ENCODE measurements at regions of chr12 and their contacts with region 1.

Region 1: DNA sequence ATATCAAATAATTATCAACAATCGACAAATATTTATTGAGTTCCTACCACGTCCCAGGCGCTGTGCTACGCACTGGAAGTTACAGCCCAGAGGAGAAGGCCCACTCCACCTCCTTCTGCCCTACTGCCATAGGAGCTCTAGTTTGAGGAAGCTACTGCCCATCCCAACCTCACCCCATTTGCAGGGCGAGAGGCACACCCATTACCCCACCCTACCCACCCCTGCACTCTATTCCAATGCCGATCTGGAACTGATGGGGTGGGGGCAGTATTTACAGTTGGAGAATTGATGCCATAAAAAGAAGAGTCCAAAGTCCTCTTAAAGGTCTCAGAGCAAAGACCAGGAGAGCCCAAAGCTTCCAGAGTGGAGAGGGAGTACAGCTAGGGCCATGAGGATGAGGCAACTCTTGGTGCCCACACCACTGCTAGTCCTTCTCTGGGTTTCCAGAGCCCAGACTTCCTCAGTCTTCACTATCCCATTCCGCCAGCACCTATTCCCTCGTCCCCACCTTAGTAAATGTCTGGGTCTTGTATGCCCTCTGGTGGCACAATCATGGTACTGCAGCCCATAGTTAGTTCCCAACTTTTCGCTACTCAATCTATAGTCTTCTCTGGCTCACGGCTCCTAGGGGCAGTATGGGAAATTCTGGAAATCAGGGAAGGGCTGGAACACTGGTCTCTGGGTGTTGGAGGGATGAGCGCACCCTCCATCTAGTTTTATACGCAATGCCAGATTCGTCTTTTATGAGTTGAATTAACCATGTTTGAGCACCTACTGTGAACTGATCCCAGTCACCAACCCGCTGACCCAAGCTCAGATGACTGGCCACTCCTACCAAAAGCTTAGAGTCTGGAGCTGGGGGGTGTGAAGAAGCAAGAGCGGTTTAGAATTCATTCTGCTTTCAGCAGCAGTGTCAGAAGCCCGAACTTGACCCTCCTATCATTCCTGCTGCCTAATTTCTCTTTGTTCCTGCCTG is 6.9 kb upstream of the ADCY6 start:
- DNase-seq: no peak
- H3K4me3 ChIP-seq: no peak overlapping the region
- H3K27ac ChIP-seq: no peak overlapping the region
- H3K27me3 ChIP-seq: no peaks in the 10 kb centered on the region
- CTCF ChIP-seq: peak; percentile 93

Region 2: GRCh38 chr12:48542300-48542928 is 253.4 kb before region 1 on chr12:
- CTCF ChIA-PET with region 1: interaction called, 19 read pairs
- POLR2A ChIA-PET with region 1: no interaction called
- DNase-seq: no peak
- H3K4me3 ChIP-seq: no peak overlapping the region
- H3K27ac ChIP-seq: no peak overlapping the region
- H3K27me3 ChIP-seq: no peaks in the 10 kb centered on the region
- CTCF ChIP-seq: peak; percentile 80

Region 3: DNA sequence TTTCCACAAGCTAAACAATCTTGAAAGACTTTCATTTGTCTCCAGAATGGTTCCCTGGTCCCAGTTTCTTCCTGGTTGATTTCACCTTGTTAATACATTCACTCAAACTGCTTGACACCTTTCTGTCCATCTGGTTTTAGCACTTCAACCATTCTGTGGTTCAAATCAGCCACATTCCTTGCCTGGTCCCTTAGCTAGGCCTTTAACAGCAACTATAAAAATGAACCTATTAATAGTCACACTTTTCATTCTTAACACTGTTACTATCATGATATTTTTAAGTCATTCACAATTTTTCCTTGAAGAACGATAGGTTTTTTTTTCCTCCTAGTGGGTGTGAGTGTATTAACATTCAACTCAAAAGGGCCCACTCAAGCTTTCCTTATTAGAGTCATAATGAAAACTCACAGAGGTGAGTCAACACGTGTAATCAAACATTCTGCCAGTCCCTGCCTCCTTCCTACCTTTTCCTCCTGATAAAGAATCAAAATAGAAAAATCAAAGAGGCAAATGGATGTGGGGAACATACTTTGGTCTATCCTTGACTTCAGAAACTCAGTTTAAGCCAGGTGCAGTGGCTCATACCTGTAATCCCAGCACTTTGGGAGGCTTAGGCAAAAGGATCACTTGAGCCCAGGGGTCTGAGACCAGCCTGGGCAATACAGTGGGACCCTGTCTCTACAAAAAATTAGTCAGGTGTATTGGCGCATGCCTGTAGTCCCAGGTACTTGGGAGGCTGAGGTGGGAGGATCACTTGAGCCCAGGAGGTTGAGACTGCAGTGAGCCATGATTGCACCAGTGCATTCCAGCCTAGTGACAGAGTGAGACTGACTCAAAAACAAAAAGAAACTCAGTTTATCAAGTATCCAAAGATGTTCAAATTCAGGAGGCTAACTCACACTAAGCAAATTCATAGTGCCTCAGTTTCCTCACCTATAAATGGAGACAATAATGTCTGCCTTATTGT is 44.7 kb before region 1 on chr12:
- CTCF ChIA-PET with region 1: interaction called, 125 read pairs
- POLR2A ChIA-PET with region 1: interaction called, 4 read pairs
- DNase-seq: no peak
- H3K4me3 ChIP-seq: no peak overlapping the region
- H3K27ac ChIP-seq: peak overlapping the region; percentile 39
- H3K27me3 ChIP-seq: no peaks in the 10 kb centered on the region
- CTCF ChIP-seq: no peak